GM18951 (cell line): ENCODE measurements at regions of chr15 and their contacts with region 1.

Region 1: DNA sequence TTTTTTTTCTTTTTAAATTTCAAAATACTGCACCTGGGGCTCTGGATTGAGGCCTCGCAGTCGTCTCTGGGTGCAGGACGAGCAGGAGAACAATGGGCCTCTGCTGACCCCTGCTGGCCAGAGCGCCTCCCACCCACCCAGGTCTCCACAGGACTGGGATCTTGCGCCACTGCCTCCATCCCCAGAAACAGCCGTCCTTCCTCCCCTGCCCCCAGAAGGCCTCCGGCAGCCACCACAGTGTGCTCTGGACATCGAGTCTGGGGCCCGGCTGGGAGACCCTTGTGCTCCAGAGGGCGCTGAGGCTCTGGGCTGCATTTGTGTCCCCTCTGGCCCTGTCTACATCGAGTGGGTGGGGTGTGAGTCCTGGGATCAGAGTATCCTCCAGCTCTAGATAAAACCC is 6.6 kb upstream of the ACSBG1 start:
- POLR2A ChIP-seq: no peak

Region 2: GRCh38 chr15:77642793-77643430 is 598.1 kb before region 1 on chr15:
- in situ Hi-C with region 1: no loop called
- POLR2A ChIP-seq: no peak

Region 3: DNA sequence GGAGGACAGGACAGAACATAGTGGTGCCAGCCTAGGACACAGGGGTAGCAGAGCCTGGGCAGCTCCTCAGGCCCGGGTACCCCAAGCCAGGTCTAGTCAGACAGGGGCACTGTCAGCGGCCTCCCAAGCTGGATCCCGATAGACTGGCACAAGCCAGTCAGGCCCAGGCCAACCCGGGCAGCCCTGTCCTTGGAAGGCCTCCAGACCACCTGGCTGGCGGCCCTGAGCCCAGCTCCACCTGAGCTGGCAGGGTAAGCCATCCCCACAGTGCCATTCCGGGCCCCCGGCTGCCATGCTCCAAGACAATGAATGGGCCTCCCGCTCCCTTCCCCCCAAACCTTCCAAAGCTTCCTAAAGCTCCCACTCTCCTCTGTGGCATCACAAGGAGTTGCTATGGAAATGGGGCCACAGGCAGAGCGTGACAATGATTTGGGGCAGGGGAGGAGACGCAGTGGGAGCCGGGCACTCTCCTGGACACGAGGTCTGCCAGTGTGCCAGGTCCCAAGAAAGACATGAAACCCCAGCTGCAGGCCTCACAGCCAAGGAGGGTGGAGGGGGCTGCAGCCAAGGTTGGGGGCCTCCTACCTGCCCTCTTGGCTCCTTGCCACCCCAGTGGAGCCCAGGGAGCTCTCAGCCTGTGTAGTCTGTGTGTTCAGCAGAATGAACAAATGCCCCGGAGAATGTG is 442.7 kb before region 1 on chr15:
- in situ Hi-C with region 1: loop called (anchors 10 kb)
- POLR2A ChIP-seq: no peak

Region 4: GRCh38 chr15:77959432-77959879 is 281.6 kb before region 1 on chr15:
- in situ Hi-C with region 1: loop called (anchors 25 kb)
- POLR2A ChIP-seq: no peak